ENCODE measurements at regions of chr16 and their contacts with region 1.

Region 1: GRCh38 chr16:75206749-75207451 is at the start of gene CTRB2:
- DNase-seq: peak; percentile 18
- ATAC-seq: peak; percentile 50
- total RNA-seq, gene CTRB2: not detected

Region 2: GRCh38 chr16:75224306-75225091 is 17.6 kb after region 1 on chr16:
- intact Hi-C with region 1: loop called in 1 of 2 experiments (anchors 2 kb)
- DNase-seq: no peak
- ATAC-seq: peak; percentile 10 to 14

Region 3: DNA sequence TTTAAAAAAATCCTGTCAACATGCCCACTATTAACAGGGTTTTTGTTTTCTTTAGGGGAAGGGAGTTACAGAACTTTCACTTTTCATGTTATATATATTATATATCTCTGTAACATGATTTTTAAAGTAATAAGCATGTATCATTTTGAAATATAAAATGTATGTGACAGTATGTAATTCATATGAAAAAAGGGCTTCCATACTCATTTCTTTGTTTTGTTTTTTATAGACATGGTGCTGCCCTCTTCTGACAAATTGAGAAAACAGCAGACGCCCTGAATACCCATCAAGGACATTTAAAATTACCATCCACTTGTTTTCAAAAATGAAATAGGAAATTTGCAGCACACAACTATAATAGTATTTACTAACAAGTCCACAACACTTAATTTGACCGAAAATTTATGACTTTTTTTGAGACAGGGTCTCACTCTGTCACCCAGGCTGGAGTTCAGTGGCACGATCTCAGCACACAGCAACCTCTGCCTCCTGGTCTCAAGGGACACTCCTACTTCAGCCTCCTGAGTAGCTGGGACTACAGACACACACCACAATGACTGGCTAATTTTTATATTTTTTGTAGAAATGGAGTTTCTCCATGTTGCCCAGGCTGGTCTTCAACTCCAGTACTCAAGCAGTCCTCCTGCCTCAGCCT is 196.0 kb after region 1 on chr16:
- intact Hi-C with region 1: loop called in 1 of 2 experiments (anchors 10 kb)
- DNase-seq: no peak
- ATAC-seq: peak; percentile 45 to 54

Measured in left cardiac atrium (tissue), 4 donors.